CD4-positive, alpha-beta T cell (primary cell): ENCODE measurements at regions of chr10 and their contacts with region 1.

Region 1: GRCh38 chr10:133278577-133279265 is 2.1 kb upstream of the ADAM8 start:
- DNase-seq: peak in 13 of 14 experiments; percentile 42 to 91 (median 54)
- ATAC-seq: peak; percentile 33
- H3K4me3 ChIP-seq: peak overlapping the region; percentile 37
- H3K4me3 Mint-ChIP-seq: peak overlapping the region; percentile 91
- H3K27ac ChIP-seq: peak overlapping the region; percentile 86
- H3K27ac Mint-ChIP-seq: peak overlapping the region; percentile 97
- H3K4me1 ChIP-seq: peaks cover 65% of the 10 kb centered on the region
- H3K4me1 Mint-ChIP-seq: peaks cover 40% of the 10 kb centered on the region
- H3K27me3 ChIP-seq: no peaks in the 10 kb centered on the region
- H3K27me3 Mint-ChIP-seq: no peaks in the 10 kb centered on the region
- CTCF ChIP-seq: no peak

Region 2: GRCh38 chr10:131928248-131929095 is 1350.2 kb before region 1 on chr10:
- CTCF ChIA-PET with region 1: no interaction called
- POLR2A ChIA-PET with region 1: no interaction called
- intact Hi-C with region 1: no loop called
- DNase-seq: peak in 5 of 14 experiments; percentile 27 to 55 (median 38)
- ATAC-seq: peak; percentile 71
- H3K4me3 ChIP-seq: no peak overlapping the region
- H3K4me3 Mint-ChIP-seq: peak overlapping the region; percentile 72
- H3K27ac ChIP-seq: peak overlapping the region in 1 of 2 donors; percentile 3
- H3K27ac Mint-ChIP-seq: peak overlapping the region; percentile 86
- H3K4me1 ChIP-seq: peaks cover 65% of the 10 kb centered on the region
- H3K4me1 Mint-ChIP-seq: peaks cover 94% of the 10 kb centered on the region
- H3K27me3 ChIP-seq: no peaks in the 10 kb centered on the region
- H3K27me3 Mint-ChIP-seq: no peaks in the 10 kb centered on the region
- CTCF ChIP-seq: no peak

Region 3: DNA sequence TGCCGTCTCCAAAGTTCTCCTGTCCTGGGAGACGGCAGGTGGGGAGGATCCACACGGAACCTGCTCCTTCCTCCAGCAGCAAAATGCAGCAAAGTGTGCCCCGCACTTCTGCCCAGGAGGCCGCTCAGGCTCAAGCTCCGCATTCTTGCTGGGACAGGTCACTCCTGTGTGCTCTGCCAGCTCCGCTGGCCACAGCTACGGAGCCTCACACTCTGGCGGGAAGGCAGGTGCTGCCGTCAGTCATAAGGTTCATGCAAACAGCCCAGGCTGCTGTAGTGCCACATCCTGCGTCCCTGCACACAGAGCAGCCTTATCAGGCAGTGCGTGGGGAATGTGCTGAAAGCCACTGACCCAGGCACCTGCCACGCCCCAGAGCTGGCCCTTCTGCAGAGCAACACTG is 168.6 kb before region 1 on chr10:
- CTCF ChIA-PET with region 1: no interaction called
- POLR2A ChIA-PET with region 1: no interaction called
- intact Hi-C with region 1: no loop called
- DNase-seq: no peak
- ATAC-seq: no peak
- H3K4me3 ChIP-seq: no peak overlapping the region
- H3K4me3 Mint-ChIP-seq: no peak overlapping the region
- H3K27ac ChIP-seq: no peak overlapping the region
- H3K27ac Mint-ChIP-seq: no peak overlapping the region
- H3K4me1 ChIP-seq: no peaks in the 10 kb centered on the region
- H3K4me1 Mint-ChIP-seq: no peaks in the 10 kb centered on the region
- H3K27me3 ChIP-seq: no peaks in the 10 kb centered on the region
- H3K27me3 Mint-ChIP-seq: peaks cover 7% of the 10 kb centered on the region
- CTCF ChIP-seq: no peak

Region 4: DNA sequence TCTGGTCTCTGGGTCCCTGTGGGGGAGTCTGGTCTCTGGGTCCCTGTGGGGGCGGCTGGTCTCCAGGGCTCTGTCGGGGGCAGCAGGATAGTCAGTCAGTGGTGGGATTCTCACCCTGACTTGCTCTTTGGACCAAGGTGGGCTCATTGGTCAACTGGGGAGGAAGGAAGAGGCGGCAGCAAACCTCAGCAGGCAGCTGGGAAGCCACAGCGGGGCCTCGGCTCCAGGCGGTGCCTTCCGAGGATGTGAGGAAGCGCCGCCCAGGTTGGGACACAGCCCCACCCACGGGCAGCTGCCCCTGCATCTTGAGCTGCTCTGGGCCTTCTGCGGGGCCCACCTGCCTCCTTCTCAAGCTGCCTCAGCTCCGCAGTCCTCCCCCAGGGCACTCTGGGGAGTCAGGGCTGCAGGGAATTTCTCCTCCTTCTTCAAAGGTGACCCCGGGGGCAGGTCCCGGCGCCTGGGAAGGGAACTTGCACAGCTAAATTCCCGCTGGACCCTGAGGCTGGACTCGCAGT is 139.1 kb before region 1 on chr10:
- CTCF ChIA-PET with region 1: interaction called, 5 read pairs
- POLR2A ChIA-PET with region 1: no interaction called
- intact Hi-C with region 1: loop called in 1 of 2 experiments (anchors 5 kb)
- DNase-seq: peak in 3 of 14 experiments; percentile 3 to 25 (median 8)
- ATAC-seq: no peak
- H3K4me3 ChIP-seq: no peak overlapping the region
- H3K4me3 Mint-ChIP-seq: no peak overlapping the region
- H3K27ac ChIP-seq: no peak overlapping the region
- H3K27ac Mint-ChIP-seq: no peak overlapping the region
- H3K4me1 ChIP-seq: peaks cover 5% of the 10 kb centered on the region
- H3K4me1 Mint-ChIP-seq: peaks cover 6% of the 10 kb centered on the region
- H3K27me3 ChIP-seq: peaks cover 3 to 9% of the 10 kb centered on the region in 2 experiments
- H3K27me3 Mint-ChIP-seq: peaks cover 17% of the 10 kb centered on the region
- CTCF ChIP-seq: no peak

Region 5: DNA sequence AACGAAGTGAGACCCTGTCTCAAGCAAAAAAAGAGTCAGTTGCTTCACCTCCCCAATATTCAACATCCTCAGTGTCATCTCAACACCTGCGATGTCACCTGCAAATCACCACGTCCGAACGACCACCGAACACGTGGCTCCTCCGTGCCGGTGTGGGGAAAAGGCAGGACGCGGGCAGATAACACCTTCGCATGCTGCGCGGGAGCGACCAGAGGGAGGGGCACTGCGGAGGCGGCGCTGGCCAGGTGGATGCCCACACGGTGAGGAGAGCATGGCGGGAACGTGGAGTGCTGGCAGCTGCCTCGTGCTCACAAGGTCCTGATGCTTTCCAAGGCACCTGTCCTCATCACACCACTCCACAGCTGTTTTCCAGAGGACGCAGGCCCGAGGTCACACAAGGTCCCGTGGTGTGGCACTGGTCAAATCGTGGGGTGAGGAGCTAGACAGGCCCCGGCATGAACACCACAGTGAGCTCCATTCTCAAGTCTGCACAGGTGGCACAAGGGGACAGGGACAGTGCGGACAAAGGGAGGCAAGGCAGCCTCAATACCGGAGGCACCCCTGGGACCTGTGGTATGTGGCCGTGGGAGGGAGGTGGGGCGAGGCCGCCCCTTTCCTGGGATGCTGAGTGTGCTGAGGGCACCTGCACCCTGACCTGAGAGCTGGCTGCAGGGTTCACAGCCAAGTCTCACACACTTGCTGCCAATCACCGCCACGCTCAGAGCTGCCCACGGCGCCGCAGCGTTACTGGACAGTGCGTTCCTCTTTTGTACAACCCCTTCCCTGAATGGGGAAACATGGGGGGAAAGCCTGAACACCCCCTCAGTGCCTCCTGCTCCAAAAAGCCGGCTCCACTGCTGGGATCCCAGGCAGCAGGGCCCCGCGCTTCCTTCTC is 17.0 kb after region 1 on chr10:
- CTCF ChIA-PET with region 1: no interaction called
- POLR2A ChIA-PET with region 1: no interaction called
- intact Hi-C with region 1: loop called in 1 of 2 experiments (anchors 2 kb)
- DNase-seq: no peak
- ATAC-seq: no peak
- H3K4me3 ChIP-seq: no peak overlapping the region
- H3K4me3 Mint-ChIP-seq: no peak overlapping the region
- H3K27ac ChIP-seq: no peak overlapping the region
- H3K27ac Mint-ChIP-seq: no peak overlapping the region
- H3K4me1 ChIP-seq: peaks cover 4% of the 10 kb centered on the region
- H3K4me1 Mint-ChIP-seq: no peaks in the 10 kb centered on the region
- H3K27me3 ChIP-seq: no peaks in the 10 kb centered on the region
- H3K27me3 Mint-ChIP-seq: no peaks in the 10 kb centered on the region
- CTCF ChIP-seq: no peak